GM12878 (cell line): ENCODE measurements at regions of chr1 and their contacts with region 1.

Region 1: GRCh38 chr1:26853156-26853555 is 9.8 kb upstream of the SFN start:
- DNase-seq: no peak
- ATAC-seq: peak; percentile 98
- H3K4me3 ChIP-seq: no peak overlapping the region
- H3K27ac ChIP-seq: no peak overlapping the region
- H3K4me1 ChIP-seq: no peaks in the 10 kb centered on the region
- H3K27me3 ChIP-seq: no peaks in the 10 kb centered on the region
- CTCF ChIP-seq: peak; percentile 77 to 83 (median 82)
- EP300 ChIP-seq: no peak
- POLR2A ChIP-seq: 0 out of 2 replicates have a peak, but pooled peaks have one; percentile 24
- RAD21 ChIP-seq: peak; percentile 75

Region 2: GRCh38 chr1:26874896-26875295 is 21.7 kb after region 1 on chr1:
- CTCF ChIA-PET with region 1: interaction called, 14 read pairs
- POLR2A ChIA-PET with region 1: no interaction called
- RAD21 ChIA-PET with region 1: interaction called, 7 read pairs
- SMC1A ChIA-PET with region 1: interaction called, 5 read pairs
- in situ Hi-C with region 1: no loop called
- intact Hi-C with region 1: loop called (anchors 1 kb)
- DNase-seq: no peak
- ATAC-seq: no peak
- H3K4me3 ChIP-seq: no peak overlapping the region
- H3K27ac ChIP-seq: no peak overlapping the region
- H3K4me1 ChIP-seq: no peaks in the 10 kb centered on the region
- H3K27me3 ChIP-seq: no peaks in the 10 kb centered on the region
- CTCF ChIP-seq: no peak
- EP300 ChIP-seq: no peak
- POLR2A ChIP-seq: no peak
- RAD21 ChIP-seq: no peak

Region 3: DNA sequence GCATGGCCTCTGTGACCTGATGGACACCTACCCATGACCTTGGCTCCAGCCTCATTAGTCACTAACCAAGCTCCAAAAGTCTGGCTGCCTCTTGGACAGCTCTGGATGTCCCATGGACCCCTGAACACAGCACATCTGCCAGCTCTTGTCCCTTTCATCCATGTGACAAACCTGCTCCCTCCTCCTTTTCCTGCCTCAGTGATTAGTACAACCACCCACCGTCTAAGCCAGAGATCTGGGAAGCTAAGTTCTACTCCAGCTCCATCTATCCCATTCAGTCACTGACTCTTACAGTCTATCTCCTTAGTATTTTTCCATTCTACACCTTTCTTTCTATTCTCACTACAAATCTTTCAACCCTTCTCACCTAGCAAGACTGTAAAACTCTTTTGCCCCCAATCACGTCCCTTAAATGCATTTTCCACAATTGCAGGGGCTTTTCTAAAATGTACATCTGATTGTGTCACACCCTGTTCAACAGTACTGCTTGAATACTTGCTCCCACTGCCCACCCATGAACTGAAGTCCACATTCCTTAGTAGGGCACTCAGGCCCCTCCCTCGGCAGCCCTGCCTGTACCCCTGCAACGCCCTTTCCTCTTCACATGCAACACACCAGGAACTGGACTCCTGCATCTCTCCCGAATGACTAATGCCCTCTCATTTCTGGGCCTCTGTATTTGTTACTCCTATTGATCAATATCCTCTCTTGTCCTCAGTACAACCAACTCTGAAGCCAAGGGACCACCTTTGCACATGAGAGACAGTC is 29.7 kb after region 1 on chr1:
- CTCF ChIA-PET with region 1: interaction called, 14 read pairs
- POLR2A ChIA-PET with region 1: interaction called, 4 read pairs
- RAD21 ChIA-PET with region 1: interaction called, 7 read pairs
- SMC1A ChIA-PET with region 1: interaction called, 7 read pairs
- in situ Hi-C with region 1: no loop called
- intact Hi-C with region 1: loop called (anchors 1 kb)
- DNase-seq: no peak
- ATAC-seq: no peak
- H3K4me3 ChIP-seq: no peak overlapping the region
- H3K27ac ChIP-seq: no peak overlapping the region
- H3K4me1 ChIP-seq: no peaks in the 10 kb centered on the region
- H3K27me3 ChIP-seq: no peaks in the 10 kb centered on the region
- CTCF ChIP-seq: no peak
- EP300 ChIP-seq: no peak
- POLR2A ChIP-seq: no peak
- RAD21 ChIP-seq: no peak